Activated CD8-positive, alpha-beta T cell treated with anti-CD3 and anti-CD28 coated beads for 36 hours (primary cell): ENCODE measurements at regions of chr9 and their contacts with region 1.

Region 1: GRCh38 chr9:5582835-5583195 is 46.1 kb upstream of the RIC1 start:
- DNase-seq: peak; percentile 67
- ATAC-seq: peak; percentile 62
- H3K4me3 Mint-ChIP-seq: no peak overlapping the region
- H3K27ac Mint-ChIP-seq: peak overlapping the region; percentile 82
- H3K4me1 Mint-ChIP-seq: peaks cover 50% of the 10 kb centered on the region
- H3K27me3 Mint-ChIP-seq: no peaks in the 10 kb centered on the region
- CTCF ChIP-seq: no peak

Region 2: GRCh38 chr9:5450359-5451091 is 132.3 kb before region 1 on chr9 and contains the start of gene CD274:
- CTCF ChIA-PET with region 1: interaction called, 80 read pairs
- POLR2A ChIA-PET with region 1: interaction called, 8 read pairs
- intact Hi-C with region 1: loop called (anchors 5 kb)
- DNase-seq: peak; percentile 91
- ATAC-seq: peak; percentile 79
- H3K4me3 Mint-ChIP-seq: peak within 1 kb of the TSS; percentile 93
- H3K27ac Mint-ChIP-seq: peak within 1 kb of the TSS; percentile 92
- H3K4me1 Mint-ChIP-seq: peaks cover 75% of the 10 kb centered on the region
- H3K27me3 Mint-ChIP-seq: no peaks in the 10 kb centered on the region
- CTCF ChIP-seq: peak; percentile 64
- total RNA-seq, gene CD274: 12.2 to 13.7 TPM

Region 3: DNA sequence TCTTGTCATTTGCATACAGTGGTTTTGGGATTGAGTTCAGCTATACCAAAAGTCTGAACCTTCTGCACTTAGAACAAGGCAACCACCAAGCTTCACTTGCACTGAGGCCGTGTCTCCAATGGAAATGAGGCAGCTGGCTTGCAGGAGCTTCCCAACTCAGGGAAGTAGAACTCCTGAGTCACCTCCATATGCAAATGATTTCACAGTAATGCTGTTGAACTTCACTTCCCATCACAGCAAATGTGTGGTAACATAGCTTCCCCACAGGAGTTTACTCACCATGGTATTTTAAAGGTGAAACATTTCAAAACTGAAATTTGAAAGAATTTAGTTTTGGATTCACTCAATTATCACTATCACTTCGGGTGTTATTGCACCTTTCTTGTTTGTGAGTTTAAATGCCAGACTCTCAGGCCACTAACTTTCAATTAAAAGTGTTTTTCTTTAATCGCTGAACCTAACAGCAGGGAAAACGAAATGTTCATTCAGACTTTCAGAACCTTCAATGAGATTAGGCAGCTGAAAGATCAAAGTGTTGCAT is 123.5 kb before region 1 on chr9:
- CTCF ChIA-PET with region 1: interaction called, 17 read pairs
- POLR2A ChIA-PET with region 1: interaction called, 3 read pairs
- intact Hi-C with region 1: loop called (anchors 5 kb)
- DNase-seq: peak; percentile 31
- ATAC-seq: peak; percentile 69
- H3K4me3 Mint-ChIP-seq: peak overlapping the region; percentile 43
- H3K27ac Mint-ChIP-seq: peak overlapping the region; percentile 78
- H3K4me1 Mint-ChIP-seq: peaks cover 62% of the 10 kb centered on the region
- H3K27me3 Mint-ChIP-seq: no peaks in the 10 kb centered on the region
- CTCF ChIP-seq: no peak

Region 4: DNA sequence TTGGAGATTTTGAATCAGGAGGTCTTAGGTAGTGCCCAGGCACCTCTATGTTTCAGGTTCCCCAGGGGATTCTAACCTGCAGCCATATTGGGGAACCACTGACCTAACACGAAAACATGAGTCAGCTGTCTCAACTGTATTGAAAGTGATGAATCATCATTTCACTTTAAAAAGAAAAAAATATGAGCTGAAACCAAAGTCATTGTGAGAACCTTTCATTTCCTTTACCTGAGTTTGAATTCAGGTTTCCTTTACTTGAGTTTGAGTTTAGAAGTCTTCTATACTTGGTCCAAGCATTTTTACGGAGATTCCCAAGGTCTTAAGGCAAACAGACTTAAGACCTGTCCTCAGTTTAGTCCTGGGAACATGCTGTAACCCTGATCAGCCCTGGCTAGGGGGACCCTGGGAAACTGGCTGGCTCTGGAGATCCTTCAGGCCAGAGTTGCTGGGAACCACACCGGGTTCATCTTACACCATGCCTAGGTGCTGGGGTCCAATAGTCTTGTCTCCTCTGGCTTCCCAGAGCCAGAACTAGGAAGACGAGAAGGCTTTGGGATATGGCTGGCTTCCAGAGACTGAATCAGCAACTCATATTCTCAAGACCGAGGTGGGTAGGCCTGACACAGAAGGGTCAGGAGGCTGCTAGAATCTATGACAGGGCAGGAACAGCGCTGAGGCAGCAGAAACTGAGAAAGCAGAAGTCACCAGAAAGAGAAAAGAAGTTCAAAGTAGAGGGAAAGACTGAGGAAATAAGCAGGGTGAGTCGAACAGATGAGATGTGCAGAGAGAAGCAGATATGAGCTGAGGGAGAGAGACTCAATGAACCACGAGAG is 88.9 kb before region 1 on chr9:
- CTCF ChIA-PET with region 1: no interaction called
- POLR2A ChIA-PET with region 1: no interaction called
- intact Hi-C with region 1: no loop called
- DNase-seq: peak; percentile 38
- ATAC-seq: peak; percentile 86
- H3K4me3 Mint-ChIP-seq: no peak overlapping the region
- H3K27ac Mint-ChIP-seq: peak overlapping the region; percentile 22
- H3K4me1 Mint-ChIP-seq: peaks cover 18% of the 10 kb centered on the region
- H3K27me3 Mint-ChIP-seq: no peaks in the 10 kb centered on the region
- CTCF ChIP-seq: no peak

Region 5: GRCh38 chr9:5593904-5594303 is 11.1 kb after region 1 on chr9:
- CTCF ChIA-PET with region 1: interaction called, 27 read pairs
- POLR2A ChIA-PET with region 1: no interaction called
- intact Hi-C with region 1: no loop called
- DNase-seq: no peak
- ATAC-seq: no peak
- H3K4me3 Mint-ChIP-seq: no peak overlapping the region
- H3K27ac Mint-ChIP-seq: no peak overlapping the region
- H3K4me1 Mint-ChIP-seq: peaks cover 26% of the 10 kb centered on the region
- H3K27me3 Mint-ChIP-seq: no peaks in the 10 kb centered on the region
- CTCF ChIP-seq: no peak